ENCODE measurements at regions of chr13 and their contacts with region 1.

Region 1: DNA sequence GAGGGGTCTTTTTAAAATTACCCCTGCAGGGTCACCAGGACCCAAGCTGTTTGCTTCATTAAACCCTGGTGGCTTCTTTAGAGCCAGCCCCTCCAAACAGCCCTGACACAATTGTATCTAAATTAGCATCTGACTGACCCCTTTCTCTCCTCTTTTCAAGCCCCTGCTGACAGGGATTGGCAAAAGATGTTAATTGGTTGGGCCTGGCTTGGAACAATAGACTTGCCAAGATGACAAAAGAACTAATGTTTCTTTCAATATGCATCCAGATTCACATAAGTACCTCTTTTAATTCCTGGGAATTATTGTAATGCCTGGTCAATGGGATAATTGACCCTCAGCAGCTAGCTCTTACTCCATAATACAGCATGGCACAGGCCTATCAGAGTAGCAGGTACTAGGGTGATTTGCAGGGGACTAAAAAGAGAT is 140.8 kb downstream of the SHISA2 start:
- DNase-seq: no peak
- ATAC-seq: no peak
- H3K4me3 ChIP-seq: no peak overlapping the region
- H3K27ac ChIP-seq: no peak overlapping the region
- H3K4me1 ChIP-seq: no peaks in the 10 kb centered on the region
- H3K27me3 ChIP-seq: peaks cover 0 to 16% (median 5%) of the 10 kb centered on the region in 7 donors
- CTCF ChIP-seq: no peak

Region 2: DNA sequence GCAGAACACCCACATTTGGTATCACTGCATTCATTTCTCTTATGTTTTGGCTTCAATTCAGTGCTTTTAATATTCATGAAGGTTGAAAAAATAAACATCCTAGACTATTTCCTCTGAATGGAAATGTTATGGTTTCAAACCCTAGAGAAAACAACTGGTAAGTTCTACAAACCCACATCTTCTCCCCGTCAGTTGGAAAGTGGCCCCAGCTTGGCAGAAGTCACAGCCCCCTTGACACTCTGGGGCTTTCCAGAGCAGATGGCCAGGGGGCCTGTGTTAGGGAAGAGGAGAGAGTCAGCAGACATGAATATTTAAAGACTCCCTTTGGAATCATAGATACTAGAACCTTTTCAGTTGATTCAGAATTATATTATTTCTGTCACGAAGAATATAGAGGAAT is 16.9 kb after region 1 on chr13:
- intact Hi-C with region 1: loop called in 1 of 10 experiments (anchors 1 kb)
- DNase-seq: no peak
- ATAC-seq: no peak
- H3K4me3 ChIP-seq: no peak overlapping the region
- H3K27ac ChIP-seq: no peak overlapping the region
- H3K4me1 ChIP-seq: no peaks in the 10 kb centered on the region
- H3K27me3 ChIP-seq: peaks cover 0 to 30% (median 16%) of the 10 kb centered on the region in 7 donors
- CTCF ChIP-seq: no peak